Psoas muscle (tissue), 8 donors: ENCODE measurements at regions of chr1 and their contacts with region 1.

Region 1: DNA sequence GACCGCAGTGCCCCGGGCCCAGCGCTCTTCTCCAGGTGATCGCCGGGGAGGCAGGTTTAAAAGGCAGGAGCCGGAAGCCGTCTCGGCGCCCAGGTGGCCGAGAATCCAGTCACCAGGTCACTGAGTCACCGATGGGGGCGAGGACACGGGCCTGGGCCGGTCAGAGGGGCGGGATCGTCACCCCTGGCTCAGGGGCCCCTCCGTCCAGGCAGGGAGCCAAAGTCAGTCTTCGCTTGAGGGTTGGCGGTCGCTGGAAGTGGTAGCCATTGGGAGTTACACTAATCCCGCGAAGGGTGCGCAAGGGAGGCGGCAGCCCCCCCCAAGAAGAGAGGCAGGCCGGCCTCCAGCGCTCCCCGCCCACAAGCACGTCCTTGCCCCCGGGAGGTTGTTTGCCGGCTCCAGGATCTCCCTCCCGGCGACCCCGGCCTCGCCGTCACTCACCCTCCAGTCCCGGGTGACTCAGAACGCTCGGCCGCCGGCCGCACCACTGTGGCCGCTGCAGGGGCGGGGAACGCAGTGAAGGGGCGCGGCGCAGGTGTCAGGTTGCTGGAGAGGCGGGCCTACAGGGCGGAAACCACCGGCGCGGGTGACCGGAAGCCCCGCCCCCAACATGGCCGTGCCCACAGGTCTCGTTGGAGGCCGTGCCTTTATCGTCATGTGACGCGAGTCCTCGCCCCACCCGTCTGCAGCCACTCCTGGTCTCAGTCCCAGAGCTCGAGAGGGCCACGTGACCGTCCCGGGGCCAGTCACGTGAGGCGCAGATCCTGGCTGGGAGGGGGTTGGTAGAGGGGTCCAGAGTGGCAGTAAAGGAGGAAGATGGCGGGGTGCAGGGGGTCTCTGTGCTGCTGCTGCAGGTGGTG is at the starts of genes CLCN6 and MTHFR:
- DNase-seq: peak; percentile 100
- ATAC-seq: peak; percentile 85 to 90 (median 87)
- H3K4me3 ChIP-seq: peak within 1 kb of the TSS; percentile 93
- H3K27ac ChIP-seq: peak within 1 kb of the TSS; percentile 99
- H3K4me1 ChIP-seq: peaks cover 45% of the 10 kb centered on the region
- H3K27me3 ChIP-seq: no peaks in the 10 kb centered on the region
- CTCF ChIP-seq: no peak
- total RNA-seq, gene CLCN6: 5.5 to 17.5 (median 8.1) TPM
- total RNA-seq, gene MTHFR: 12.7 to 26.2 (median 17.6) TPM

Region 2: DNA sequence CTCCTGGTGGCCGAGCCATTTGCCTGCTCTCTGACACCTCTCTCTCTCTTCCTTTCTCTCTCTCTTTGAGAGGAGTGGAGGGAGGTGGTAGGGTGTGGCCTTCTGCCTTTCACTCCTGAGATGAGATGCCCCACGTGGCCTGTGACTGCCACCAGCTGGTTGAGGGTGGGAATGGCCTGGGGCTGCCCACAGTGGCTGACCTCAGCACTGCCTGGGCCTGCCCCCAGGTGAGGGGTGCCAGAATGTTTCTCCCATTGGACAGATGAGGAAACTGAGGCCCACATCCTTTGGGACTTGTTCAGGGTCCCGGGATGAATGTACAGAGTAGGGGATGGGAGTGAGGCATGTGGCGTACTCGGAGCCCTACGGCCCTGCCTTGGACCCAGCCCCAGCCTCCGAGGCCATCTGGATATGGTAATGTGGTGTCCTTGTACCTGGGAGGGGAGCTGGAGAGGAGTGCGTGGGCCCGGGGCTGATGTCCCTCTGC is 56.4 kb before region 1 on chr1:
- intact Hi-C with region 1: no loop called
- DNase-seq: peak; percentile 62 to 78
- ATAC-seq: peak; percentile 48 to 84 (median 80)
- H3K4me3 ChIP-seq: no peak overlapping the region
- H3K27ac ChIP-seq: no peak overlapping the region
- H3K4me1 ChIP-seq: no peaks in the 10 kb centered on the region
- H3K27me3 ChIP-seq: peaks cover 0 to 2% (median 0%) of the 10 kb centered on the region in 3 donors
- CTCF ChIP-seq: peak; percentile 55

Region 3: DNA sequence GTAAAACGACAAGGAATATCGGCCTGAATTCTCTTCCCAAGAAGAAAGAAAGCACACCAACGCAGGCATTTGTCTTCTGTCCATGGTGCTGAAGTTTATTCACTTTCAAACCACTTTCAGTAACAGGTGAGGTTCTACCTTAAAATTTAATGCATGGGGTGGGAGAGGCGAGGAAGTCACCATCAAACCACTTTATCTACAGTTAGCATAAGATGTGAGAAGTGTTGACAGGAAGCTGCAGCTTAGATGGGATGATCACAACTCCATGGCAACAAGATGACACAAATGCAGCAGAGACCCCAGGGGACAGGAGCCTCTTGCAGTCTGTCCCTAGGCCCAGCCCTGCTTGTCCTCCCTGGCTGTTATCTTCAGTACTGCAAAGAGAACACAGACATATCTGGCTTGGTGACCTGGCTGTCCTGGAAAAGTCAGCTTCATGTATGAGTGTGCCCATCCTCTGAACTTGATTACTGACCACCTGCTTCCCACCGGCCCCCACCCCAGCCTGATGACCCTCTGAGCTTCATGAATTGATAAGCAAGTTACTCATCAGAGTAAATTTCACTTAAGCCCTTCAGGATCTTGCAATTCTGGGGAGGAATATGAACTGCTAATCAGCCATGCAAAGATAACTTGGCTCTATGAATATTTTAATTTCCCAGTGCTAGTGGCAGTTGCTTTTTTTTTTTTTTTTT is 40.1 kb after region 1 on chr1:
- intact Hi-C with region 1: no loop called
- DNase-seq: no peak
- ATAC-seq: no peak
- H3K4me3 ChIP-seq: no peak overlapping the region
- H3K27ac ChIP-seq: no peak overlapping the region
- H3K4me1 ChIP-seq: no peaks in the 10 kb centered on the region
- H3K27me3 ChIP-seq: peaks cover 0 to 3% (median 2%) of the 10 kb centered on the region in 3 donors
- CTCF ChIP-seq: no peak

Region 4: GRCh38 chr1:12339396-12339795 is 533.7 kb after region 1 on chr1:
- intact Hi-C with region 1: loop called in 1 of 2 experiments (anchors 10 kb)
- DNase-seq: no peak
- ATAC-seq: peak in 2 of 4 donors; percentile 18 to 27
- H3K4me3 ChIP-seq: no peak overlapping the region
- H3K27ac ChIP-seq: peak overlapping the region; percentile 65
- H3K4me1 ChIP-seq: peaks cover 63% of the 10 kb centered on the region
- H3K27me3 ChIP-seq: no peaks in the 10 kb centered on the region
- CTCF ChIP-seq: no peak